Activated naive CD4-positive, alpha-beta T cell treated with anti-CD3 and anti-CD28 coated beads for 36 hours (primary cell): ENCODE measurements at regions of chr9 and their contacts with region 1.

Region 1: GRCh38 chr9:131502781-131503625 is at the start of gene POMT1:
- DNase-seq: peak; percentile 89
- H3K4me3 Mint-ChIP-seq: peak within 1 kb of the TSS; percentile 98
- H3K27ac Mint-ChIP-seq: peak within 1 kb of the TSS; percentile 77
- H3K4me1 Mint-ChIP-seq: peaks cover 50% of the 10 kb centered on the region
- H3K27me3 Mint-ChIP-seq: no peaks in the 10 kb centered on the region
- total RNA-seq, gene POMT1: 28.7 to 33.8 TPM

Region 2: GRCh38 chr9:131253891-131254491 is 249.0 kb before region 1 on chr9:
- CTCF ChIA-PET with region 1: no interaction called
- intact Hi-C with region 1: loop called (anchors 5 kb)
- DNase-seq: no peak
- H3K4me3 Mint-ChIP-seq: peak overlapping the region; percentile 77
- H3K27ac Mint-ChIP-seq: peak overlapping the region; percentile 87
- H3K4me1 Mint-ChIP-seq: peaks cover 41% of the 10 kb centered on the region
- H3K27me3 Mint-ChIP-seq: no peaks in the 10 kb centered on the region

Region 3: DNA sequence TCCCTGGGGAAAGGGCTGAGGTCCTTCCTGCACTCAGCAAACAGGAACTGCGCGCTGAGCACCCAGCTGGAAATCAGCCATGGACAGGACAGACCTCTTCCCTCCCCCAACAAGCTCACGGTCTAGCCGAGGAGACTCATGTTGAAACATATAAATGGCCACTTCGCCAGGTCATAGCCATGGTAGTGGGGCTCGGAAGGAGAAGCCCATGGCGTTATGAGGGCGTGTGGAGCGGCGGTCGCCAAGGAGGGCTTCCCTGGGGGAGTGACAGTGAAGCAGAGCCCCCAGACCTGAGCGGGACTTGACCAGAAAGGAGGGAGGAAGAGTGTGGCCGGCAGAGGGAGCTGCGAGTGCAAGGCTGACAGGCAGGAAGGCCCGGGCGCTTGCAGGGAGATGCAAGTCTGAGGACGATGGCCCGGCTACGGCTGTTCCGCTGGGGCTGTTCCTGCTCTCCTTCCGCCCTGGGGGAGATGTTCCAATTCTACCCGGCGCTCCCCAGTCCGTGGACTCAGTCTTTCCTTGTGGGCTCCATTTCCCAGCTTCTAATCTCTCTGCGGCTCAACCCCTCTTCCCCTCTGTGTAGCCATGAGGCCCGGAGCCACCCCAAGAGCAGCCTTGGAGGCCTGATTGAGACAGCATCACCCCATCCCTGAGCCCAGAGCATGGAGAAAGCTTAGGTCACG is 153.0 kb before region 1 on chr9:
- CTCF ChIA-PET with region 1: interaction called, 12 read pairs
- intact Hi-C with region 1: loop called (anchors 2 kb)
- DNase-seq: peak; percentile 95
- H3K4me3 Mint-ChIP-seq: peak overlapping the region; percentile 11
- H3K27ac Mint-ChIP-seq: peak overlapping the region; percentile 11
- H3K4me1 Mint-ChIP-seq: peaks cover 7% of the 10 kb centered on the region
- H3K27me3 Mint-ChIP-seq: no peaks in the 10 kb centered on the region

Region 4: DNA sequence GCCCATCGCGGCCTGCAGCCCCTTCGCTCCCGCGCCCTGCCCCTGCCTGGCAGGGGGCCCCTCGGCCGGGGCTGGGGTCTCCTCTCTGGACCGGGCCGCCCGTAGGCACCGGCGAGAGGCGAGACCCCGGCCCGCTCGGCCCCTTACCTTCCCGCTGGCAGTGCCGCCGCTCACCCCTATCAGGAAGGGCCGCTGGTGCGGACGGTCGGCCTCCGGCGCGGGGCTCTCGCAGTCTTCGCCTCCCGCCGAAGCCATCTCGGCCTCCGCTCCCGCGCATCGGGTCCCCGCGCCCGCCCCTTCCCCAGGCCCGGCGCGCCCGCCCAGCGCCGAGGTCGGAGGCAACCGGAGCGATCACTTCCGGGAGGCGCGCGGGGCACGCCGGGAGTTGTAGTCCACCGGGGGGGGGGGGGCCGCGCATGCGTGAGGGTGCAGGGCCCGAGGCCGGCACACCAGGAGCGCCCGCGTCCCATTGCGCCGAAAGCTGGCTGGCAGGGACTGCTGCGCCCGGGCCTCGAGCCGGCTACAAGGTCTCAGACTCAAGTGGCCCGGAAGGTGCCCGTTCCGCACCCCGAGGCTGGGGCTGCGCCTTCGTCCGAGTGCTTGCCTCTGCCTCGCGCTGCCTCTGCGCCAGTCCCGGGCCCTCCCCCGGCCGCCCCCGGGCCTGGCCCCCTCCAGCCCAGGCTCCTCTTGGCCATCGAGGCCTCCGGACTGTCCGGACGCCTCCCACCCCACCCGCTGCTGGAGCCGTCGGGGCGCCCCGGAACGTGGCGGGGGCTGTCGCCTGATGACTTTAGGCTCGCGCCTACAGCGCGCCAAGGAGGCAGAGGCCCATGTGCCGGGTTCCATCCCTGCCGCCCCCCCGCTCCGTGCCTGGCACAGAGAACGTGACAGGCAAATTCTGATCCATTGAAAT is 28.2 kb after region 1 on chr9 and contains the start of gene UCK1:
- CTCF ChIA-PET with region 1: no interaction called
- intact Hi-C with region 1: loop called (anchors 1 kb)
- DNase-seq: peak; percentile 73
- H3K4me3 Mint-ChIP-seq: peak within 1 kb of the TSS; percentile 75
- H3K27ac Mint-ChIP-seq: peak within 1 kb of the TSS; percentile 65
- H3K4me1 Mint-ChIP-seq: peaks cover 18% of the 10 kb centered on the region
- H3K27me3 Mint-ChIP-seq: no peaks in the 10 kb centered on the region
- total RNA-seq, gene UCK1: 18.7 to 21.7 TPM

Region 5: GRCh38 chr9:131554088-131554864 is 51.3 kb after region 1 on chr9:
- CTCF ChIA-PET with region 1: no interaction called
- intact Hi-C with region 1: no loop called
- DNase-seq: no peak
- H3K4me3 Mint-ChIP-seq: no peak overlapping the region
- H3K27ac Mint-ChIP-seq: no peak overlapping the region
- H3K4me1 Mint-ChIP-seq: peaks cover 3% of the 10 kb centered on the region
- H3K27me3 Mint-ChIP-seq: peaks cover 24% of the 10 kb centered on the region

Region 6: GRCh38 chr9:131668439-131669268 is 165.7 kb after region 1 on chr9:
- CTCF ChIA-PET with region 1: no interaction called
- intact Hi-C with region 1: loop called (anchors 5 kb)
- DNase-seq: peak; percentile 85
- H3K4me3 Mint-ChIP-seq: peak overlapping the region; percentile 60
- H3K27ac Mint-ChIP-seq: peak overlapping the region; percentile 100
- H3K4me1 Mint-ChIP-seq: peaks cover 79% of the 10 kb centered on the region
- H3K27me3 Mint-ChIP-seq: no peaks in the 10 kb centered on the region